ENCODE measurements at regions of chr17 and their contacts with region 1.

Region 1: DNA sequence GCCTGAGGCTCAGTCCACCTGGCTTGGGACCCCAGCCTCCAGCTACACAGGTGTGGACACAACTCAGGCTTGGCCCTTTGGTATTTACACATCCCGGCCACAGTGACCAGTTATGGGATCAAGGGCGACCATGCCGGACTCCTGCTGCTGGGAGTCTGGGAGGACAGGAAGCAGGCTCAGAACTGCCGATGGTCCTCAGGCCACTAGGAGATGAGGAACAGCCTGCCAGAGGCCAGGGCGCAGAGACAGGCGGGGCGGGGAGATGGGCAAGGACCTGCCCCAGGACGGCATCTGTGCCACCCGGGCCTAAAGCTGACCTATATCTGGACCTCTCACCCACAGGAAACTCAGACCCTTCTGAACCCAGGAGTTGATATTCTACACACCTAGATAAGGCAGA is 12.5 kb downstream of the NXN start:
- DNase-seq: no peak
- H3K4me3 ChIP-seq: no peak overlapping the region
- H3K27ac ChIP-seq: no peak overlapping the region
- H3K4me1 ChIP-seq: no peaks in the 10 kb centered on the region
- H3K27me3 ChIP-seq: no peaks in the 10 kb centered on the region
- CTCF ChIP-seq: no peak

Region 2: DNA sequence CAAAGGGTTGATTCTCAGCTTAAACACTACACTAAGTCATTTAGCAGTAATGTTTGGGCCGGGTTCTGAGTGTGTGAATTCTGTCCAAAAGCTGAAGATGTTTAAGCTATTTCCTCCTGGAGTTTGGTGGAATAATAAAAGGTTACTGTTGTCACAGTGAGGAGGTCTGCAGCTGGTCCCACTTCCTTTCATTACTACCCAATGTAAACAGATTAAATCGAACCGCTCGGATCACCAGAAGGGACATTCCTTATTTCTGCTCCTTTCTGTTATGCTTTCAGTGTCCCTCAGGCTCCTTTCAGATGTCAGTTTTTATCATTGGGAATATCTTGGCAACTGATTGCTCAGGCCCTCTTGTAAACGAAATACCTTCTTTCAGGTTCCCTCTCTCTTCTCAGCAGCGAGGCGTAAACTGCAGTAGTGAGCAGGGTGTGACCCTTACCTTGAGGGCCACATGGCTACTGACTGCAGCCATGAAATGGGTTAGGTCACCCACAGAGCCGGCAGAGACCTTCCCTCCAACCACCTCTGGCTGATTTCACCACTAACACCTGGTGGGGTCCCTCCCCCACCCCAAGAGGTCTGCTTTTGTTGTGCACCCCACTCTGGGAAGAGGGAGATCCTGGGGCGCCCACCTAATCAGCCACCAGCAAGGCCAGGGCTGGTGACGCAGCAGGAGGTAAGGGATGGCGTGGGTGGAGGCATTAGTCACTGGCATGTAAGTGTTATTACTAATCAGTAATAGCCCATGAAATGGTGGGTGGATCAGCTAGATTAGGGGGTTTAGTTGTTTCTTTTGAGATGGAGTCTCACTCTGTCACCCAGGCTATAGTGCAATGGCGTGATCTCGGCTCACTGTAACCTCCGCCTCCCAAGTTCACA is 370.1 kb before region 1 on chr17:
- intact Hi-C with region 1: no loop called
- DNase-seq: no peak
- H3K4me3 ChIP-seq: no peak overlapping the region
- H3K27ac ChIP-seq: no peak overlapping the region
- H3K4me1 ChIP-seq: no peaks in the 10 kb centered on the region
- H3K27me3 ChIP-seq: no peaks in the 10 kb centered on the region
- CTCF ChIP-seq: no peak

Region 3: GRCh38 chr17:948284-948852 is 18.8 kb before region 1 on chr17:
- intact Hi-C with region 1: loop called (anchors 1 kb)
- DNase-seq: no peak
- H3K4me3 ChIP-seq: no peak overlapping the region
- H3K27ac ChIP-seq: no peak overlapping the region
- H3K4me1 ChIP-seq: peaks cover 3 to 16% of the 10 kb centered on the region in 2 donors
- H3K27me3 ChIP-seq: no peaks in the 10 kb centered on the region
- CTCF ChIP-seq: no peak